ENCODE measurements at regions of chr5 and their contacts with region 1.

Region 1: GRCh38 chr5:64811050-64811640 is 42.4 kb downstream of the CWC27 start:
- DNase-seq: peak; percentile 69
- H3K4me3 ChIP-seq: no peak overlapping the region
- H3K27ac ChIP-seq: no peak overlapping the region
- H3K4me1 ChIP-seq: no peaks in the 10 kb centered on the region
- H3K27me3 ChIP-seq: no peaks in the 10 kb centered on the region
- CTCF ChIP-seq: peak; percentile 75

Region 2: DNA sequence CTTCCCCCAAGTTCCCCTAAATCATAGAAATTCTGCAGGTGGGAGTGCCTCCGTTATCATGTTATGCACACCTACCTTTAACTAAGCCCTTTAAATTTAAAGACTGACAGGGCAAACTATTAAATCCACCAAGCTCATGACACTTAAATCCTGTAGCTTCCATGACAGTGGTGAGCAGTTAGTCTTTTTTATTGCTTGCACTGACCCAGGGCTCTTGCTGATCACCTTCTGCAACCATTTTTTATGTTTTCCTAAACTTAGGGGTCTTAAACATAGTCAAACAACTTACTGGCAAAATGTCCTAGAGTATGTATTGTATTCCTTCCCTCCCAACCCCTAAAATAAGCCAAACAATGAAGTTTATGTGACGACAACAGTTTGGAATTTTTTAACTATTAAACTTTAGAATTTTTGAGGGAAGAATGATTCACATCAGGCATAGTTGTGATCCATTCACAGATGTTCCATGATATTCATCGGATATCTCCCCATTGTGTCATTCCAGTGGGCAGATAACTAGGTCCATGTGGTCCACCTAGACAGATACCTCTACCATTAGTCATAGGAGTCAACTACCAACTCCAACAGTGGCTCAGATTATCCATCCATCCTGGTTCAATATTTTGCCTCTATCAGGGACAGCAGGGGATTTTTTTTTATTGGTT is 387.4 kb after region 1 on chr5:
- CTCF ChIA-PET with region 1: no interaction called
- POLR2A ChIA-PET with region 1: no interaction called
- intact Hi-C with region 1: no loop called
- DNase-seq: no peak
- H3K4me3 ChIP-seq: no peak overlapping the region
- H3K27ac ChIP-seq: no peak overlapping the region
- H3K4me1 ChIP-seq: no peaks in the 10 kb centered on the region
- H3K27me3 ChIP-seq: no peaks in the 10 kb centered on the region
- CTCF ChIP-seq: no peak

Region 3: GRCh38 chr5:65305913-65306312 is 494.8 kb after region 1 on chr5:
- CTCF ChIA-PET with region 1: no interaction called
- POLR2A ChIA-PET with region 1: no interaction called
- intact Hi-C with region 1: loop called (anchors 10 kb)
- DNase-seq: no peak
- H3K4me3 ChIP-seq: no peak overlapping the region
- H3K27ac ChIP-seq: no peak overlapping the region
- H3K4me1 ChIP-seq: no peaks in the 10 kb centered on the region
- H3K27me3 ChIP-seq: no peaks in the 10 kb centered on the region
- CTCF ChIP-seq: no peak